ENCODE measurements at regions of chr18 and their contacts with region 1.

Region 1: GRCh38 chr18:62714671-62715435 is 488 bp upstream of the PHLPP1 start:
- DNase-seq: peak; percentile 78 to 97 (median 92)
- ATAC-seq: peak; percentile 71
- H3K4me3 ChIP-seq: peak overlapping the region; percentile 64 to 71
- H3K4me3 Mint-ChIP-seq: peak overlapping the region; percentile 97
- H3K27ac ChIP-seq: peak overlapping the region; percentile 80 to 89
- H3K27ac Mint-ChIP-seq: peak overlapping the region; percentile 99
- H3K4me1 ChIP-seq: peaks cover 15% of the 10 kb centered on the region
- H3K4me1 Mint-ChIP-seq: peaks cover 37% of the 10 kb centered on the region
- H3K27me3 ChIP-seq: no peaks in the 10 kb centered on the region
- H3K27me3 Mint-ChIP-seq: no peaks in the 10 kb centered on the region
- CTCF ChIP-seq: peak; percentile 77

Region 2: GRCh38 chr18:62505669-62506494 is 209.0 kb before region 1 on chr18:
- CTCF ChIA-PET with region 1: no interaction called
- POLR2A ChIA-PET with region 1: interaction called, 3 read pairs
- intact Hi-C with region 1: loop called in 1 of 2 experiments (anchors 5 kb)
- DNase-seq: peak in 6 of 9 experiments; percentile 7 to 74 (median 48)
- ATAC-seq: peak; percentile 70
- H3K4me3 ChIP-seq: peak overlapping the region; percentile 59 to 71
- H3K4me3 Mint-ChIP-seq: peak overlapping the region; percentile 90
- H3K27ac ChIP-seq: peak overlapping the region; percentile 59 to 79
- H3K27ac Mint-ChIP-seq: peak overlapping the region; percentile 96
- H3K4me1 ChIP-seq: peaks cover 15% of the 10 kb centered on the region
- H3K4me1 Mint-ChIP-seq: peaks cover 20% of the 10 kb centered on the region
- H3K27me3 ChIP-seq: no peaks in the 10 kb centered on the region
- H3K27me3 Mint-ChIP-seq: no peaks in the 10 kb centered on the region
- CTCF ChIP-seq: no peak

Region 3: GRCh38 chr18:62751341-62751821 is 36.5 kb after region 1 on chr18:
- CTCF ChIA-PET with region 1: no interaction called
- POLR2A ChIA-PET with region 1: no interaction called
- intact Hi-C with region 1: no loop called
- DNase-seq: no peak
- ATAC-seq: no peak
- H3K4me3 ChIP-seq: no peak overlapping the region
- H3K4me3 Mint-ChIP-seq: no peak overlapping the region
- H3K27ac ChIP-seq: no peak overlapping the region
- H3K27ac Mint-ChIP-seq: no peak overlapping the region
- H3K4me1 ChIP-seq: peaks cover 5% of the 10 kb centered on the region
- H3K4me1 Mint-ChIP-seq: peaks cover 19% of the 10 kb centered on the region
- H3K27me3 ChIP-seq: no peaks in the 10 kb centered on the region
- H3K27me3 Mint-ChIP-seq: no peaks in the 10 kb centered on the region
- CTCF ChIP-seq: no peak

Region 4: GRCh38 chr18:62784966-62785413 is 70.1 kb after region 1 on chr18:
- CTCF ChIA-PET with region 1: interaction called, 3 read pairs
- POLR2A ChIA-PET with region 1: no interaction called
- intact Hi-C with region 1: loop called in 1 of 2 experiments (anchors 5 kb)
- DNase-seq: no peak
- ATAC-seq: no peak
- H3K4me3 ChIP-seq: no peak overlapping the region
- H3K4me3 Mint-ChIP-seq: no peak overlapping the region
- H3K27ac ChIP-seq: no peak overlapping the region
- H3K27ac Mint-ChIP-seq: no peak overlapping the region
- H3K4me1 ChIP-seq: peaks cover 7% of the 10 kb centered on the region
- H3K4me1 Mint-ChIP-seq: peaks cover 37% of the 10 kb centered on the region
- H3K27me3 ChIP-seq: no peaks in the 10 kb centered on the region
- H3K27me3 Mint-ChIP-seq: no peaks in the 10 kb centered on the region
- CTCF ChIP-seq: no peak

Region 5: GRCh38 chr18:62868645-62869044 is 153.8 kb after region 1 on chr18:
- CTCF ChIA-PET with region 1: no interaction called
- POLR2A ChIA-PET with region 1: no interaction called
- intact Hi-C with region 1: loop called (anchors 1 to 5 kb)
- DNase-seq: no peak
- ATAC-seq: no peak
- H3K4me3 ChIP-seq: no peak overlapping the region
- H3K4me3 Mint-ChIP-seq: no peak overlapping the region
- H3K27ac ChIP-seq: peak overlapping the region in 1 of 2 experiments; percentile 59
- H3K27ac Mint-ChIP-seq: peak overlapping the region; percentile 89
- H3K4me1 ChIP-seq: peaks cover 10% of the 10 kb centered on the region
- H3K4me1 Mint-ChIP-seq: peaks cover 18% of the 10 kb centered on the region
- H3K27me3 ChIP-seq: no peaks in the 10 kb centered on the region
- H3K27me3 Mint-ChIP-seq: no peaks in the 10 kb centered on the region
- CTCF ChIP-seq: no peak

Region 6: GRCh38 chr18:63161761-63162195 is 446.9 kb after region 1 on chr18:
- CTCF ChIA-PET with region 1: no interaction called
- POLR2A ChIA-PET with region 1: no interaction called
- intact Hi-C with region 1: loop called in 1 of 2 experiments (anchors 5 kb)
- DNase-seq: peak; percentile 51 to 94 (median 78)
- ATAC-seq: peak; percentile 85
- H3K4me3 ChIP-seq: peak overlapping the region; percentile 17 to 30
- H3K4me3 Mint-ChIP-seq: peak overlapping the region; percentile 65
- H3K27ac ChIP-seq: peak overlapping the region; percentile 81 to 99
- H3K27ac Mint-ChIP-seq: peak overlapping the region; percentile 98
- H3K4me1 ChIP-seq: peaks cover 77% of the 10 kb centered on the region
- H3K4me1 Mint-ChIP-seq: peaks cover 91% of the 10 kb centered on the region
- H3K27me3 ChIP-seq: no peaks in the 10 kb centered on the region
- H3K27me3 Mint-ChIP-seq: no peaks in the 10 kb centered on the region
- CTCF ChIP-seq: no peak

Region 7: DNA sequence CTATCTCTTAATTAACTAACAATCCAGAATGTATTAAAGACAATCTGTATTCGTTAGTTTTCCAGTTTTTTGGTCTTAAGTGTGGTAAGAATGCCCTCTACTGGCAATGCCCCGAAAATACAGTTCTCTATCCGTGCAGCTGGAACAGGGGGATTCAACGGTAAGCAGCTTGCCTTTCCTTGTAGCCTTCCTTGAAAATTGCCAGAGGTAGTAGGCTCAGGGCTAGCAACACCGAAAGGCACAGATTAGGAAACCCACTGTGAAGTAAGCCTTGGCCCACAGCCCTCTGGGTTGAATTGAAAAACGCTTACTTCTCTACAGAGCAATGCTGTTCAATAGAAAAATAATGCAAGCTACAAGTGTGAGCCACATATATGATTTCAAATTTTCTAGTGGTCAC is 724.5 kb after region 1 on chr18:
- CTCF ChIA-PET with region 1: interaction called, 3 read pairs
- POLR2A ChIA-PET with region 1: no interaction called
- intact Hi-C with region 1: loop called in 1 of 2 experiments (anchors 5 kb)
- DNase-seq: peak; percentile 3 to 75 (median 48)
- ATAC-seq: peak; percentile 84
- H3K4me3 ChIP-seq: no peak overlapping the region
- H3K4me3 Mint-ChIP-seq: no peak overlapping the region
- H3K27ac ChIP-seq: no peak overlapping the region
- H3K27ac Mint-ChIP-seq: no peak overlapping the region
- H3K4me1 ChIP-seq: no peaks in the 10 kb centered on the region
- H3K4me1 Mint-ChIP-seq: no peaks in the 10 kb centered on the region
- H3K27me3 ChIP-seq: no peaks in the 10 kb centered on the region
- H3K27me3 Mint-ChIP-seq: peaks cover 10% of the 10 kb centered on the region
- CTCF ChIP-seq: peak; percentile 94